AG04449 (cell line): ENCODE measurements at regions of chr11 and their contacts with region 1.

Region 1: GRCh38 chr11:6481012-6481923 is at the starts of genes ARFIP2 and TIMM10B:
- DNase-seq: peak; percentile 86
- H3K4me3 ChIP-seq: peak within 1 kb of the TSS; percentile 99
- CTCF ChIP-seq: no peak

Region 2: GRCh38 chr11:6269994-6270393 is 211.3 kb before region 1 on chr11:
- CTCF ChIA-PET with region 1: no interaction called
- POLR2A ChIA-PET with region 1: no interaction called
- DNase-seq: no peak
- H3K4me3 ChIP-seq: no peak overlapping the region
- CTCF ChIP-seq: no peak

Region 3: DNA sequence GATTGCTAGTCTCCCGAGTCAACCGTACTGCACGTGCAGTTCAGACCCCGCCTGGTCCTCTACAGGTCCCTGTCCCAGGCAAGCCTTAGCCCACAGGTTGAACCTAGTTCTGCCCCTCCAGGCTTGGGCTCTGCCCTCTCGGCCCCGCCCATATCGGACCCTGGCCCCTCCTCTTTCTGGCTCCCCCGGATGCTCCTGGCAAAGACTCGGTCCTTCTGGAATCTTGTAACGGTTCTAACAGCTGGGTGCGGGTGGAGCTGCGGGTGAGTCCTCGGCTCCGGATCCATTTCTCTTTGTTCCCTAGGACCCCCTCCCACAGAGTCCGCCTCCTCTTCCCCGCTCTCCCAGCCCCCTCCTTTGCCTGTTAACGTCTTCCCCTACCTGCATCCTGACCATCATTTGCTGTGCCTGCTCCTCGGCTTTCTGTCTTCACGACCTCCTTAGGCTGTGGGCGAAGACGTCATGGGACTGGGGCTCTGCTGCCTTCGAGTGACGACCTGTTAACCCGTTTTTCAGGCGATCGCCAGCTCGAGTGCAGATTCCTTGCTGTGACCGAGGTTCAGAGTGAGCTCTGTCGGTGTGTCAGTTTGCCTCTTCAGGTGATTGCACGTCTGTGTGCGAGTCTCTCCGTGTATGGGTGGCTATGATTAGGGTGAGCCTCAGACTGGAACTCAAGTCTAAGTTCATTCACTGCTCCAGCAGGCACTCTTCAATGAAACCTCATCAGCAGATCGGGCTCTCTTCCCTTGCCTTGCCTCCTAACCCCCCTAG is 16.0 kb after region 1 on chr11 and contains the start of gene DNHD1:
- CTCF ChIA-PET with region 1: interaction called, 13 read pairs
- POLR2A ChIA-PET with region 1: no interaction called
- DNase-seq: no peak
- H3K4me3 ChIP-seq: no peak within 1 kb of the TSS
- CTCF ChIP-seq: no peak

Region 4: DNA sequence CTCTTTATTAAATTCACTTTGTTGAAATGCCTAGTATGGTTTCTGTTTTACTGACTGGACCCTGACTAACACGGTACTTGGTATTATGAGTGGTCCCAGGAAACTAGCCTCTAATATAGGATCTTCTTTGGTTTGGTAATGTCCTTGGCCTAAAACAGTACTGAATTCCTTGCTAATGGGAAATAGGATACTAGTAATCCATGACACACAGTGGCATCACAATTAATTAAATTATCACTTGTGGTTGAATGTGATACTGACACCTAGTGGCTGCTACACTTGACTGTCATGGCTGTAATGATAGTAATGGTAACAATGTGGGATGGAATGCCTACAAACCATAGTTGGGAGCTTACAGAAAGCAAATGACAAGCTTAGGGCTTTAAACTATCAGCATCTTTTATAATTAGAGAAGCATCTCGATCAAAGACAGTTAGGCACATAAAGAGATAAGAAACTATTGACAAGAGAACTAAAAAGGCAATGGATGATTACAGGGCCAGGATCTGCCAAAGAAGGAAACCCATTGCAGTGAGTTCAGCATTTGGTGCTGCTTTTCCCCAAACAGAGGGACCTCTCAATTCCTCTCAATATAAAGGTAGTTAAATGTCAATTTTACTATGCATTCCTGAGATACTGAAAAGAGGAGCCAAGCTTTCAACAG is 24.4 kb after region 1 on chr11:
- CTCF ChIA-PET with region 1: interaction called, 75 read pairs
- POLR2A ChIA-PET with region 1: no interaction called
- DNase-seq: peak; percentile 36
- H3K4me3 ChIP-seq: no peak overlapping the region
- CTCF ChIP-seq: peak; percentile 46